ENCODE measurements at regions of chr4 and their contacts with region 1.

Region 1: GRCh38 chr4:4334798-4335520 is 44.9 kb downstream of the ZBTB49 start:
- DNase-seq: peak; percentile 61 to 73
- ATAC-seq: peak; percentile 72 to 84 (median 74)
- H3K4me3 ChIP-seq: no peak overlapping the region
- H3K27ac ChIP-seq: no peak overlapping the region
- H3K4me1 ChIP-seq: no peaks in the 10 kb centered on the region
- H3K27me3 ChIP-seq: peaks cover 0 to 3% (median 0%) of the 10 kb centered on the region in 3 donors
- CTCF ChIP-seq: peak; percentile 81

Region 2: GRCh38 chr4:4256799-4257198 is 78.2 kb before region 1 on chr4:
- intact Hi-C with region 1: loop called (anchors 2 to 5 kb)
- DNase-seq: no peak
- ATAC-seq: peak in 1 of 4 donors; percentile 42
- H3K4me3 ChIP-seq: no peak overlapping the region
- H3K27ac ChIP-seq: no peak overlapping the region
- H3K4me1 ChIP-seq: no peaks in the 10 kb centered on the region
- H3K27me3 ChIP-seq: peaks cover 0 to 15% (median 3%) of the 10 kb centered on the region in 3 donors
- CTCF ChIP-seq: no peak

Region 3: GRCh38 chr4:4406455-4407298 is 71.7 kb after region 1 on chr4:
- intact Hi-C with region 1: no loop called
- DNase-seq: peak in 1 of 2 donors; percentile 38
- ATAC-seq: peak in 1 of 4 donors; percentile 29
- H3K4me3 ChIP-seq: no peak overlapping the region
- H3K27ac ChIP-seq: no peak overlapping the region
- H3K4me1 ChIP-seq: no peaks in the 10 kb centered on the region
- H3K27me3 ChIP-seq: peaks cover 0 to 25% (median 7%) of the 10 kb centered on the region in 3 donors
- CTCF ChIP-seq: no peak